ENCODE measurements at regions of chr3 and their contacts with region 1.

Region 1: GRCh38 chr3:47824541-47825473 is 21.9 kb downstream of the DHX30 start:
- DNase-seq: peak; percentile 83 to 85 (median 84)
- ATAC-seq: peak; percentile 98 to 100 (median 99)
- H3K4me3 ChIP-seq: peak overlapping the region; percentile 85 to 99 (median 89)
- H3K27ac ChIP-seq: peak overlapping the region; percentile 49 to 68 (median 68)
- H3K4me1 ChIP-seq: peaks cover 0 to 22% (median 6%) of the 10 kb centered on the region in 4 donors
- H3K27me3 ChIP-seq: no peaks in the 10 kb centered on the region
- CTCF ChIP-seq: peak; percentile 79 to 96 (median 91)
- POLR2A ChIP-seq: peak; percentile 78

Region 2: DNA sequence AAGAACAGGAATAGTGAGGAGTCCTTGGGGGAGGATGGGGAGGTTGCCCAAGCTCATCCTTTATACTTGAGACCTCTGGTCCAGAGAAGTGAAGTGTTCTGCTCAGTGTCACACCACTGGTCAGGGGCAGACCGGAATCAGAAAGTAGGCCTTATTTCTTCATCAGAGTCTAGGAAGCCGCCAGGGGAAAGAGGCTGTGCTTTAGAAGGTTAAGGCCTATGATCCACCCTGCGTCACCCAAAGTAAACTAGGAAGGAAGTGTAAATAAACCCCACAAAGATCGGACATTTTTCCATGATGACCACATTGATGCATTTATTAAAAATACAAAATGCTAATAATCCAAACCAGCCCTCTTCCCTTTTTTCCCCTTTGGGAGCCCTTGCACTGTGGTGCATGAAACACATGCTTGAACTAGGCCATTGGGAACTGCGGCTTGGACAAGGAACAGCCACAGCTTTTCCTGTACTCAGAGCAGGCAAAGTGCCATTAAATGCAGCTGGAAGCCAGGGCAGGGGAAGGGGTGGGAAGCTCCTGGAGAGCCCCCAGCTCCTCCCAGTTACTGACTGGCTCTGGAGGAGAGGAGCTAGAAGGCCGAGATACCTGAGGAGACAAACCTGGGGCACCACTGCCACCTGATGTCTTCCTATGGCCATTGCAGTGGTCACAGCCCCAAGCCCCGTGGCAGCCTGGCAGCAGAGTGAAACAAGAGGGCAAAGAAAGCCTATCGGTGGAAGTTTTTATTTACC is 326.4 kb after region 1 on chr3:
- intact Hi-C with region 1: loop called in 1 of 2 experiments (anchors 10 kb)
- DNase-seq: peak; percentile 76 to 80 (median 78)
- ATAC-seq: peak; percentile 99 to 100 (median 99)
- H3K4me3 ChIP-seq: no peak overlapping the region
- H3K27ac ChIP-seq: no peak overlapping the region
- H3K4me1 ChIP-seq: no peaks in the 10 kb centered on the region
- H3K27me3 ChIP-seq: no peaks in the 10 kb centered on the region
- CTCF ChIP-seq: peak; percentile 84 to 89 (median 84)
- POLR2A ChIP-seq: no peak

Measured in right lobe of liver (tissue), 6 donors.